OCI-LY7 (cell line): ENCODE measurements at regions of chr11 and their contacts with region 1.

Region 1: GRCh38 chr11:93543292-93543977 is at the start of gene SMCO4:
- DNase-seq: peak; percentile 85
- H3K4me3 ChIP-seq: peak within 1 kb of the TSS; percentile 89
- H3K27ac ChIP-seq: peak within 1 kb of the TSS; percentile 55
- H3K4me1 ChIP-seq: peaks cover 31% of the 10 kb centered on the region
- CTCF ChIP-seq: peak; percentile 72
- total RNA-seq, gene SMCO4: 36.1 and 44.7 TPM in 2 replicates

Region 2: DNA sequence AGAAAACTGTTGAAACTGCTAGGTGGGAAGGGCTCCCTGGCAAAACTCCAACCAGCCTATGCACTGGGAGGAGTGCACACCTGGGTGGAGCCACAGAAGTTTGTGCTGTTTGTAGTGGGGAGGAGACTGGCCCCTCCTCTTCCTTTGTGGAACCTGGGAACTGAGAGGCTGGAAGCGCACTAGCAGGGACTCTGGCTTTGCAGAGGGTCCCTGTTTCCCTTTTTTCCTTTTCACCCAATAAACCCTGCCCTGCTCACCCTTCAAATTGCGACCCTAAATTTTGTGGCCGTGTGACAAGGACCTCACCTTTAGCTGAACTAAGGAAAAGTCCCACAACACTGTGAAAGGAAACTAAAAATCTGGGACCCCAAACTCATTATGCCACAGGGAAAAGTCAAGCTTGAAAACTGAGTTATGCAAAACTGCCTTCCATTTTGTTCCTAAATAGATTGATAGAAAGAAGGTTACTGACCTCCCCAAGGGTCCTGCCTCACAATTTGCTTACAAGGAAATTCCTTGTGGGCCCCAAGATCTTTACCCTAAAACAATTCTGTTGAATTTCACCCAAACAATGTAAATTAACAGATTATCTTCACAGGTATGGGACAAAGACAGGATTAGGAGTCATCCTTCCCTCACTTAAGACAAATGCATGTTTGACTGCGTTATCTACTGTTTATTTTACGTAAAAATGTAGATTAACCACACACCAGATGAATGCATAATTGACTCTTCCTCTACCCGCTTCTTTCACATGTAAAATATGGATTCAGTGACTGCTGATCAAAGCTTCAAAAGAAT is 426.6 kb before region 1 on chr11:
- CTCF ChIA-PET with region 1: no interaction called
- POLR2A ChIA-PET with region 1: no interaction called
- intact Hi-C with region 1: no loop called
- DNase-seq: no peak
- H3K4me3 ChIP-seq: no peak overlapping the region
- H3K27ac ChIP-seq: no peak overlapping the region
- H3K4me1 ChIP-seq: no peaks in the 10 kb centered on the region
- CTCF ChIP-seq: no peak

Region 3: GRCh38 chr11:93234602-93235207 is 308.7 kb before region 1 on chr11:
- CTCF ChIA-PET with region 1: no interaction called
- POLR2A ChIA-PET with region 1: no interaction called
- intact Hi-C with region 1: loop called (anchors 1 kb)
- DNase-seq: peak; percentile 80
- H3K4me3 ChIP-seq: no peak overlapping the region
- H3K27ac ChIP-seq: no peak overlapping the region
- H3K4me1 ChIP-seq: no peaks in the 10 kb centered on the region
- CTCF ChIP-seq: peak; percentile 89

Region 4: GRCh38 chr11:93410441-93410840 is 133.0 kb before region 1 on chr11:
- CTCF ChIA-PET with region 1: no interaction called
- POLR2A ChIA-PET with region 1: interaction called, 3 read pairs
- intact Hi-C with region 1: loop called (anchors 2 kb)
- DNase-seq: peak; percentile 70
- H3K4me3 ChIP-seq: peak overlapping the region; percentile 27
- H3K27ac ChIP-seq: peak overlapping the region; percentile 92
- H3K4me1 ChIP-seq: peaks cover 40% of the 10 kb centered on the region
- CTCF ChIP-seq: no peak

Region 5: DNA sequence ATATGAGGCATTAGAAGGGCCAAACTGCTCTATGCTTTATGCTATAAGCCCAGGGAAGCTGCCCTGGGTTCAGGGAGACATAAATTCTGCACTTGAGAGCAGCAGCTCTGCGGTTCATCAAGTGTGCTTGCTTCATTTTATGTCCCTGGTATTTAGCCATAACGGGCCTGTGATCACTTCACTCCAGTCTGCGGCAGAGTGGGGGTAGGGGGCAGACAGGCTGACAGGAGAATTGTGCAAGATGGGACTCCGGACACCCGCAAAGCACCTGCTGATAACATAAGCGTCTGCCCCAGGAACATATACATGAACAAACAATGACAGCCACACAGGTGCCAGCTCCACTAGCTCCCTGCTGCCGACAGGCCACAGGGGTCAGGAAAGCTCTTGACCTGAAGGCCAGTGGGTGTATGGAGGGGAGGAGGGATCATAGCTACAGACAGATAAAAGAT is 56.4 kb before region 1 on chr11:
- CTCF ChIA-PET with region 1: no interaction called
- POLR2A ChIA-PET with region 1: no interaction called
- intact Hi-C with region 1: no loop called
- DNase-seq: no peak
- H3K4me3 ChIP-seq: no peak overlapping the region
- H3K27ac ChIP-seq: no peak overlapping the region
- H3K4me1 ChIP-seq: no peaks in the 10 kb centered on the region
- CTCF ChIP-seq: no peak

Region 6: GRCh38 chr11:93525601-93526345 is 17.7 kb before region 1 on chr11:
- CTCF ChIA-PET with region 1: interaction called, 4 read pairs
- POLR2A ChIA-PET with region 1: interaction called, 24 read pairs
- intact Hi-C with region 1: loop called (anchors 1 kb)
- DNase-seq: peak; percentile 50
- H3K4me3 ChIP-seq: peak overlapping the region; percentile 56
- H3K27ac ChIP-seq: peak overlapping the region; percentile 71
- H3K4me1 ChIP-seq: peaks cover 82% of the 10 kb centered on the region
- CTCF ChIP-seq: no peak

Region 7: GRCh38 chr11:93564895-93565294 is 21.5 kb after region 1 on chr11:
- CTCF ChIA-PET with region 1: no interaction called
- POLR2A ChIA-PET with region 1: no interaction called
- intact Hi-C with region 1: no loop called
- DNase-seq: no peak
- H3K4me3 ChIP-seq: no peak overlapping the region
- H3K27ac ChIP-seq: no peak overlapping the region
- H3K4me1 ChIP-seq: no peaks in the 10 kb centered on the region
- CTCF ChIP-seq: no peak

Region 8: GRCh38 chr11:93741094-93741881 is 197.9 kb after region 1 on chr11 and contains the starts of genes C11orf54 and TAF1D:
- CTCF ChIA-PET with region 1: no interaction called
- POLR2A ChIA-PET with region 1: interaction called, 3 read pairs
- intact Hi-C with region 1: loop called (anchors 5 kb)
- DNase-seq: peak; percentile 98
- H3K4me3 ChIP-seq: peak within 1 kb of the TSS; percentile 96
- H3K27ac ChIP-seq: peak within 1 kb of the TSS; percentile 78
- H3K4me1 ChIP-seq: peaks cover 34% of the 10 kb centered on the region
- CTCF ChIP-seq: no peak
- total RNA-seq, gene C11orf54: 25.8 and 29.5 TPM in 2 replicates
- total RNA-seq, gene TAF1D: 201 and 206 TPM in 2 replicates